ENCODE measurements at regions of chr16 and their contacts with region 1.

Region 1: GRCh38 chr16:346587-346986 is 5.9 kb downstream of the AXIN1 start:
- DNase-seq: no peak
- H3K4me3 ChIP-seq: no peak overlapping the region
- H3K27ac ChIP-seq: no peak overlapping the region
- H3K4me1 ChIP-seq: peaks cover 0 to 12% (median 9%) of the 10 kb centered on the region in 4 donors
- H3K27me3 ChIP-seq: no peaks in the 10 kb centered on the region
- CTCF ChIP-seq: no peak

Region 2: GRCh38 chr16:234468-235305 is 111.9 kb before region 1 on chr16 and contains the start of gene FAM234A:
- intact Hi-C with region 1: loop called (anchors 5 kb)
- DNase-seq: peak; percentile 93 to 95
- H3K4me3 ChIP-seq: peak within 1 kb of the TSS; percentile 81 to 99
- H3K27ac ChIP-seq: peak within 1 kb of the TSS; percentile 96 to 98
- H3K4me1 ChIP-seq: peaks cover 0 to 16% (median 5%) of the 10 kb centered on the region in 4 donors
- H3K27me3 ChIP-seq: no peaks in the 10 kb centered on the region
- CTCF ChIP-seq: peak; percentile 34 to 35

Region 3: GRCh38 chr16:265711-266110 is 80.9 kb before region 1 on chr16:
- intact Hi-C with region 1: no loop called
- DNase-seq: no peak
- H3K4me3 ChIP-seq: no peak overlapping the region
- H3K27ac ChIP-seq: no peak overlapping the region
- H3K4me1 ChIP-seq: no peaks in the 10 kb centered on the region
- H3K27me3 ChIP-seq: no peaks in the 10 kb centered on the region
- CTCF ChIP-seq: no peak

Region 4: GRCh38 chr16:287298-287811 is 59.2 kb before region 1 on chr16:
- intact Hi-C with region 1: no loop called
- DNase-seq: no peak
- H3K4me3 ChIP-seq: no peak overlapping the region
- H3K27ac ChIP-seq: no peak overlapping the region
- H3K4me1 ChIP-seq: no peaks in the 10 kb centered on the region
- H3K27me3 ChIP-seq: peaks cover 0 to 10% of the 10 kb centered on the region in 2 donors
- CTCF ChIP-seq: no peak